Naive thymus-derived CD4-positive, alpha-beta T cell (primary cell): ENCODE measurements at regions of chr19 and their contacts with region 1.

Region 1: DNA sequence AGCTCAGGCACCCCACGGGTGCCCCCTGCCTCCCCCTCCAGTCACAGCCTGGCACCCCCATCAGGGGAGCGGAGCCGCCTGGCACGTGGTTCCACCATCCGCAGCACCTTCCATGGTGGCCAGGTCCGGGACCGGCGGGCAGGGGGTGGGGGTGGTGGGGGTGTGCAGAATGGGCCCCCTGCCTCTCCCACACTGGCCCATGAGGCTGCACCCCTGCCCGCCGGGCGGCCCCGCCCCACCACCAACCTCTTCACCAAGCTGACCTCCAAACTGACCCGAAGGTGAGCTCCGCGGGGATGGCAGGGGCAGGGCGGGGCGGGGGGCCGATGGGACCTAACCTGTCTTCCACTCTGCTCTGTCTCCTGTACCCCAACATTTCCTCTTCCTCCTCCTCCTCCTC is 25.0 kb downstream of the CKM start:
- DNase-seq: no peak
- ATAC-seq: no peak
- H3K4me3 ChIP-seq: no peak overlapping the region
- H3K4me3 Mint-ChIP-seq: no peak overlapping the region
- H3K27ac ChIP-seq: no peak overlapping the region
- H3K27ac Mint-ChIP-seq: no peak overlapping the region
- H3K4me1 ChIP-seq: no peaks in the 10 kb centered on the region
- H3K4me1 Mint-ChIP-seq: no peaks in the 10 kb centered on the region
- H3K27me3 ChIP-seq: no peaks in the 10 kb centered on the region
- H3K27me3 Mint-ChIP-seq: no peaks in the 10 kb centered on the region

Region 2: DNA sequence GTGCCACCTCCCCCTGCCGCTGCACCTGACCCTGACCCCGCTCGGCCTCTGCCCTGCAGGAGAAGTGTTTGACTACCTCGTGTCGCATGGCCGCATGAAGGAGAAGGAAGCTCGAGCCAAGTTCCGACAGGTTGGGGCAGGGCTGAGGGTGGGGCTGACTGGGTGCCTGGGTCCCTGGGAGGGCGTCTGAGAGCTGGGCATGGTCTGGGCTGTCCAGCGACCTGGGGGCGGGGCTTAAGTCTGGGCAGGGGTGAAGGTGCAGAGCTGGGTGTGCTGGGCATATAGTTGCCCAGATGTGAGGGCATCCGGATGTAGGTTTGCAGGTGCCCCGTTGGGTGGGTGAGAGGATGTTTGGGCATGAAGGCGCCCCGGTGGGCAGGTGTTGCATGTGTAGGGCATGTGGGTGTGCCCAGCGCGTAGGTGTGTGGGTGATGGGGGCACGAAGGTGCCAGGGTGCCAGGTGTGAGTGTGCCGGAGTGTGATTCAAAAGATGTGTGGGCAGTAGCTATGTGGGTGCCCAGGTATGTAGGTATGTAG is 32.8 kb before region 1 on chr19:
- CTCF ChIA-PET with region 1: no interaction called
- POLR2A ChIA-PET with region 1: no interaction called
- intact Hi-C with region 1: no loop called
- DNase-seq: no peak
- ATAC-seq: no peak
- H3K4me3 ChIP-seq: no peak overlapping the region
- H3K4me3 Mint-ChIP-seq: no peak overlapping the region
- H3K27ac ChIP-seq: no peak overlapping the region
- H3K27ac Mint-ChIP-seq: peak overlapping the region in 1 of 9 donors; percentile 32
- H3K4me1 ChIP-seq: no peaks in the 10 kb centered on the region
- H3K4me1 Mint-ChIP-seq: peaks cover 0 to 4% (median 0%) of the 10 kb centered on the region in 7 donors
- H3K27me3 ChIP-seq: no peaks in the 10 kb centered on the region
- H3K27me3 Mint-ChIP-seq: no peaks in the 10 kb centered on the region

Region 3: GRCh38 chr19:45323671-45324081 is 26.0 kb after region 1 on chr19:
- CTCF ChIA-PET with region 1: no interaction called
- POLR2A ChIA-PET with region 1: no interaction called
- intact Hi-C with region 1: loop called in 1 of 2 experiments (anchors 1 kb)
- DNase-seq: no peak
- ATAC-seq: no peak
- H3K4me3 ChIP-seq: no peak overlapping the region
- H3K4me3 Mint-ChIP-seq: no peak overlapping the region
- H3K27ac ChIP-seq: no peak overlapping the region
- H3K27ac Mint-ChIP-seq: no peak overlapping the region
- H3K4me1 ChIP-seq: no peaks in the 10 kb centered on the region
- H3K4me1 Mint-ChIP-seq: peaks cover 0 to 6% (median 0%) of the 10 kb centered on the region in 7 donors
- H3K27me3 ChIP-seq: no peaks in the 10 kb centered on the region
- H3K27me3 Mint-ChIP-seq: peaks cover 4 to 35% (median 30%) of the 10 kb centered on the region in 5 donors